ENCODE measurements at regions of chr11 and their contacts with region 1.

Region 1: DNA sequence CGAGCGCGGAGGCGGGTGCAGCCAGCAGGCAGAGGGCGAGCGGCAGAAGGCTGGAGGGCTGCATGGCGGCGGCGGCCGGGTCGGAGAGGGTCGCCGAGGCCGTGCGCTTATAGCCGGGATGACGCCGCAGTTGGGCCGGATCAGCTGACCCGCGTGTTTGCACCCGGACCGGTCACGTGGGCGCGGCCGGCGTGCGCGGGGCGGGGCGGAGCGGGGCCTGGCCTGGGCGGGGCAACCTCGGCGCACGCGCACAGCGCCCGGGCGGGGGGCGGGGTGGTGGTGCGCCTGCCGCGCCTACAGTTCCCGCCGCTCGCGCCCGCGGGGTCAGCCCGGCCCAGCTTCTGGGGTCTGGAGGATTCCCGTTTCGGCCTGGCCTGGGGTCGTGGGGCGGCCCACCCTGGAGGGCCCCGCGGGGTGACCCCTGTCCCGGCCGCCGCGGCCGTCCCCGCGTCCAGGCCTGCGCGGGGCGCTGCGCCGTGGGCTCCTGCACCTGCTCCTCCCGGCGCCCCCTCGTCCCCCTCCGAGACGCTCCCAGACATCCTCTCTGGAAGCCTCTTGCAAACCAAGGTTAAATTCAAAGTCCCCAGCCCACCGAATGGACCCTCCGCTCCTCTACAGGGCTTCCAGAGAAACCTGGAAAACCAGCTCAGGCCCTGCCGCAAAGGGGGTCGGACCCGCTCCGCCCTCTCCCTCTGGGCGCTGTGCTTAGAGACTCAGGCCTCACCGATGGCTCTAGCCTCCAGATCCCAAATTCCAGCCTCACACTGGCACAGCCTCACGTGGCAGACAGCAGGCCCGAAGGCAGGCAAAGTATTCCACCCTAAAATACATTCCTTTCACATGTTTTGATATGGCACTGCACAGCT is at the start of gene CTSD:
- DNase-seq: peak; percentile 96
- ATAC-seq: peak; percentile 85
- total RNA-seq, gene CTSD: 957 TPM

Region 2: GRCh38 chr11:1714973-1715885 is 48.8 kb before region 1 on chr11:
- intact Hi-C with region 1: loop called (anchors 5 kb)
- DNase-seq: no peak
- ATAC-seq: peak; percentile 82

Region 3: DNA sequence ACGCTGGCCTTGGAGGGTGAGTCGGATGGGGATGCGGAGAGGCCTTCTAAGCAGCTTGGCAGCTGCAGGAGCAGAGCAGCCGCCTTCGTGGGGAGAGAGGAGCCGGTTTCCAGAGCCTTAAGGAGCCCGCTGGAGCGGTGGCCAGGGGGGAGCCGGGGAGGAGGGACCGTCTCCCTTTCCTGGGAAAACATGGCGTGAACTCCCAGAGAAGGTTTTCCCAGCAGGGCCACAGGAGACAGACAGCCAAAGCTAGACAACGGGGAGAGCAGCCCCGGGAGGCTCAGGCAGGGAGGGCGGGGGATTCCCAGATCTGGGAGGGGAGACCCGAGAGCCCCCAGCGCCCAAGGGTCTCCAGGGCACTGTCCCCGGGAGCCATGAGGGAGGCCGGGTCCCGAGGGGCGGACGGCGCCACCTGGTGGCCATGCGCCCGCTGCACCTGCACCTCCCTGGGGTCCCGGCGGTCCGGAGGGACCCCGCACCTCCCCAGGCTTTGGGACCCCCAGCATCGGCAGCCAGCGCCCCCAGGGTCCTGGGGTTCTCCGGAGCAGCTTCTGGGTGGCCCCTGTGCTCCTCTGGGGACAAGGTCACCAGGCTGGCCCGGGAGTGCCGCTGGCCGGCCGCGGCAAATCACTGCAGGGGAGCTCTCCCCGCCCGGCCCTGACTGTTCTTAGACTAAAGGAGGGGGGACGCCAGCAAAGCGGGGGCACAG is 68.3 kb after region 1 on chr11:
- intact Hi-C with region 1: no loop called
- DNase-seq: peak; percentile 83
- ATAC-seq: peak; percentile 80